ENCODE measurements at regions of chr1 and their contacts with region 1.

Region 1: GRCh38 chr1:77533660-77534305 is 148.7 kb downstream of the ZZZ3 start:
- DNase-seq: peak; percentile 17 to 80 (median 51)
- ATAC-seq: peak; percentile 52 to 63 (median 58)
- H3K4me3 ChIP-seq: no peak overlapping the region
- H3K4me3 Mint-ChIP-seq: no peak overlapping the region
- H3K27ac ChIP-seq: no peak overlapping the region
- H3K27ac Mint-ChIP-seq: peak overlapping the region; percentile 53 to 85
- H3K4me1 ChIP-seq: peaks cover 0 to 5% of the 10 kb centered on the region in 2 experiments
- H3K4me1 Mint-ChIP-seq: peaks cover 8 to 10% (median 8%) of the 10 kb centered on the region in 3 donors
- H3K27me3 ChIP-seq: no peaks in the 10 kb centered on the region
- H3K27me3 Mint-ChIP-seq: no peaks in the 10 kb centered on the region

Region 2: DNA sequence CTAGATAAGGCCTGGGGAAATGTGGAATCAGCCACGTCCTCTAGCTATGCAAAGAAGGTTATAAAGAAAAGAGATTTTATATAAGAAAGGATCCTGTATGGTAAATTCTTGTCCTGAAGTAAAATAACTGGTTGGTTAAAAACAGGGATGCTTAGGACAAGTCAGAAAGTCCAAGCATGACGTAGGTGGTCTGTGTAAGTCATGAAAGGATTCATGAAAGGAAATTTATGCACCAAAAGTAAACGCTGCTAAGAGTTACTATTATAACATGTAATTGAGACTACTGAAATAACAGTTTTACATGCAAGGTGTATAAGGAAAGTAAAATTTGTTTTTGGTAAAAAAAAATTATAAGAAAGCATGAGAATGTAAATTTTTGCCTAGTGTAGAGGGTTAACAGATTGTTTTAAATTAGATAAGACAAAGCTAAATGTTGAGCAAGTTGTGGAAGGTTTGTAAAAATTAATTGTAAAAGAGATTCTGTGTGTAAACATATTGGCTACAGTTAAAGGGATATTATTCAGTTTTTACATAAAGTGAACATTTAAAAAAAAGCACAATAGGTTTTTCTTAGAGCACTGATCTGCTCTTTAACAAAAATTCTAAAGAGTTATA is 358.4 kb before region 1 on chr1:
- CTCF ChIA-PET with region 1: interaction called, 4 to 11 read pairs
- POLR2A ChIA-PET with region 1: no interaction called
- DNase-seq: no peak
- ATAC-seq: no peak
- H3K4me3 ChIP-seq: no peak overlapping the region
- H3K4me3 Mint-ChIP-seq: no peak overlapping the region
- H3K27ac ChIP-seq: no peak overlapping the region
- H3K27ac Mint-ChIP-seq: no peak overlapping the region
- H3K4me1 ChIP-seq: no peaks in the 10 kb centered on the region
- H3K4me1 Mint-ChIP-seq: peaks cover under 1 to 3% (median 2%) of the 10 kb centered on the region in 3 donors
- H3K27me3 ChIP-seq: no peaks in the 10 kb centered on the region
- H3K27me3 Mint-ChIP-seq: no peaks in the 10 kb centered on the region

Region 3: GRCh38 chr1:77387553-77387952 is 146.2 kb before region 1 on chr1:
- CTCF ChIA-PET with region 1: no interaction called
- POLR2A ChIA-PET with region 1: no interaction called
- DNase-seq: no peak
- ATAC-seq: no peak
- H3K4me3 ChIP-seq: no peak overlapping the region
- H3K4me3 Mint-ChIP-seq: no peak overlapping the region
- H3K27ac ChIP-seq: no peak overlapping the region
- H3K27ac Mint-ChIP-seq: no peak overlapping the region
- H3K4me1 ChIP-seq: peaks cover 0 to 2% of the 10 kb centered on the region in 2 experiments
- H3K4me1 Mint-ChIP-seq: peaks cover 29 to 34% (median 31%) of the 10 kb centered on the region in 3 donors
- H3K27me3 ChIP-seq: no peaks in the 10 kb centered on the region
- H3K27me3 Mint-ChIP-seq: no peaks in the 10 kb centered on the region

Region 4: DNA sequence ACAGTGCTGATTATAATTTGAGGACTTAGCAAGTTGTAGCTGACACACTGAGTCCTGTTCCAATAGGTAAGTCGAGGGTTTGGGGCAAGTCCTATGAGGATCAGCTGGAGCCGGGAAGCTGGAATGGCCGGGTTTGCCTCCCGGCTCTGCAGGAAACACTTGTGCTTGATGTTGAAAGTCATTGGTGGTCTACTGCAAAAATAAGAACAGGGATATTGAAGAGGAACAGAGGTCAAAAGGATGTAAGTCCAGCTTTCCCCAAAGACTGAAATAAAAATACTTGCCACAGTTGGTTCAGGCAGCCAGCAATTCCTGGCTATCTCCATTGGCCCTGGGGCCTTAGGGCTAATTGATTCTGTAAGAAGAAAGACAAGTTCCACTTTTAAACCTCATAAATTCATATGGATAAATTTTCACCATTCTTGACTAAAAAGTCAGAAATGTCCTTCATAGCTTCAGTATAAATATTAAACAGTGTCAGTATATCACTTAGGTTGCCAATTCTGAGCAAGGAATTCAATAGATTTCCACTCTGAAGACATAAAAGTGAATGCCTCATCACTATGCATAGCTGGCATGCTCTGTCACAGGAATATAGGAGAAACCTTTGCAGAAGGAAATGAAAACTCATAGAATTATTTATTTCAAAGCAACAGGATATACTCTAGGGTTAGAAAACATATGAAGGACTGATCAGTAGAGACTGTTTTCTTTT is 86.8 kb before region 1 on chr1:
- CTCF ChIA-PET with region 1: interaction called, 3 to 10 read pairs
- POLR2A ChIA-PET with region 1: interaction called in 1 of 2 experiments, 3 read pairs
- DNase-seq: no peak
- ATAC-seq: no peak
- H3K4me3 ChIP-seq: no peak overlapping the region
- H3K4me3 Mint-ChIP-seq: no peak overlapping the region
- H3K27ac ChIP-seq: no peak overlapping the region
- H3K27ac Mint-ChIP-seq: no peak overlapping the region
- H3K4me1 ChIP-seq: no peaks in the 10 kb centered on the region
- H3K4me1 Mint-ChIP-seq: peaks cover 7 to 32% (median 11%) of the 10 kb centered on the region in 3 donors
- H3K27me3 ChIP-seq: peaks cover 0 to 2% of the 10 kb centered on the region in 2 experiments
- H3K27me3 Mint-ChIP-seq: no peaks in the 10 kb centered on the region

Region 5: DNA sequence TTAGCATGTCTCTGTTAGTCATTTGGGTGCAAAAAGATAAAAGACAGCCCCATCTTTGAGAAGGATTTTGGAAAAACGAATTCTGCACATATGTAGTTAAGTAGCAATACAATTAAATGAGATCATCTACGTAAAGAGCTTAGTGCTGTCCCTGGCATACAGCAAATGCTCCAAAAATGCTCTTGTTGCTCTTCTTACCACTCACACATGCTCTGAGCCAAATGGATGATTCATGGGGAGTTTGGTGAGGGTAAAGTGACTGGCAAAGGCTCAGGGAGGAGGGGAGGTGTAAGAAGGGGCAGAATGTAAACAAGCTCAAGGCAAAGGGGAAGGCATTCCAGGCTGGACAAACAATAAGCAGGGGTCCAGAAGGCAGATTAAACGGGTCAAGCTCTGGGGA is 60.1 kb before region 1 on chr1:
- CTCF ChIA-PET with region 1: interaction called in 1 of 2 experiments, 13 read pairs
- POLR2A ChIA-PET with region 1: no interaction called
- DNase-seq: no peak
- ATAC-seq: no peak
- H3K4me3 ChIP-seq: no peak overlapping the region
- H3K4me3 Mint-ChIP-seq: no peak overlapping the region
- H3K27ac ChIP-seq: no peak overlapping the region
- H3K27ac Mint-ChIP-seq: no peak overlapping the region
- H3K4me1 ChIP-seq: peaks cover 0 to 3% of the 10 kb centered on the region in 2 experiments
- H3K4me1 Mint-ChIP-seq: peaks cover 10 to 14% (median 12%) of the 10 kb centered on the region in 3 donors
- H3K27me3 ChIP-seq: no peaks in the 10 kb centered on the region
- H3K27me3 Mint-ChIP-seq: peaks cover 0 to 3% of the 10 kb centered on the region in 2 donors

Region 6: GRCh38 chr1:77632216-77632615 is 98.4 kb after region 1 on chr1:
- CTCF ChIA-PET with region 1: no interaction called
- POLR2A ChIA-PET with region 1: no interaction called
- DNase-seq: no peak
- ATAC-seq: no peak
- H3K4me3 ChIP-seq: no peak overlapping the region
- H3K4me3 Mint-ChIP-seq: no peak overlapping the region
- H3K27ac ChIP-seq: no peak overlapping the region
- H3K27ac Mint-ChIP-seq: no peak overlapping the region
- H3K4me1 ChIP-seq: no peaks in the 10 kb centered on the region
- H3K4me1 Mint-ChIP-seq: peaks cover 6 to 14% (median 8%) of the 10 kb centered on the region in 3 donors
- H3K27me3 ChIP-seq: no peaks in the 10 kb centered on the region
- H3K27me3 Mint-ChIP-seq: no peaks in the 10 kb centered on the region

Measured in T-cell (primary cell).